ENCODE measurements at regions of chr6 and their contacts with region 1.

Region 1: DNA sequence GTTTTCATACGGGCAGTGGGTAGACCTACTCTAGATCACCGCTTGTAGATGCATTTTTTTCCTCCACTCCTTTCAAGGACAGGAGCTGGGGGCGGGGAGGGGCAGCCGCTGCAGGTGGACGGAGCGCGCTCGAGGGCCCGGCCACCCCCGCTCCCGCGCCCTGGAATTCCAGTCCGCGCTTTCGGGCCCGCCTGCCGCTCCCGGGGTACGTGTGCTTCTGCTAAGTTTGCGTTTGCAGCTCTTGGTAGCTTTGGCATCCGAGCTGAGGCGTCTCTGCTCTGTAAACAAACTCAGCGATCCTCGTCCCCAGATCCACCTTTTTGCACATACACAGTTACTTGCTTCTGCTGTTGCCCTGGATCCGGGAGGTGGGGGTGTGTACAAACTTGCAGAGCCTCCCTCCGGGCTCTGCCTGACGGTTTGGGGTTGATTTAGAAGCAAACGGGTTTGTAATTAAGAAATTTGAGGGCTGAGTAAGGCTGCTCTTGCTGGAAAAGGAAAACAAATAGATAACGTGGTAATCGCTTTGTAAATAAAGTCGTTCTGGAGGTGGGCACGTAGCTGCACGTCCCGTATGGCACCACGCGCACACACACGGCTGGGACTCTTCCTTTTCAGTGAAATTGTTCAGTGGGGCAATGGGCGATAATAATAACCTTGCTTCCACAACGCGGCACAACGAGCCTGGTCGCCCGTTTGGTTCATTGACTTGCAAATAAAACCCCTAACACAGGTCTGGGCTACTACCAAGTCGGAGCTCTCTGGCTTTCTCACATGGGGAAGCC is 976 bp upstream of the CITED2 start:
- DNase-seq: peak; percentile 90
- ATAC-seq: peak; percentile 70
- H3K4me3 ChIP-seq: peak overlapping the region; percentile 91
- H3K27ac ChIP-seq: peak overlapping the region; percentile 83
- H3K4me1 ChIP-seq: peaks cover 35% of the 10 kb centered on the region
- H3K27me3 ChIP-seq: no peaks in the 10 kb centered on the region
- CTCF ChIP-seq: no peak

Region 2: DNA sequence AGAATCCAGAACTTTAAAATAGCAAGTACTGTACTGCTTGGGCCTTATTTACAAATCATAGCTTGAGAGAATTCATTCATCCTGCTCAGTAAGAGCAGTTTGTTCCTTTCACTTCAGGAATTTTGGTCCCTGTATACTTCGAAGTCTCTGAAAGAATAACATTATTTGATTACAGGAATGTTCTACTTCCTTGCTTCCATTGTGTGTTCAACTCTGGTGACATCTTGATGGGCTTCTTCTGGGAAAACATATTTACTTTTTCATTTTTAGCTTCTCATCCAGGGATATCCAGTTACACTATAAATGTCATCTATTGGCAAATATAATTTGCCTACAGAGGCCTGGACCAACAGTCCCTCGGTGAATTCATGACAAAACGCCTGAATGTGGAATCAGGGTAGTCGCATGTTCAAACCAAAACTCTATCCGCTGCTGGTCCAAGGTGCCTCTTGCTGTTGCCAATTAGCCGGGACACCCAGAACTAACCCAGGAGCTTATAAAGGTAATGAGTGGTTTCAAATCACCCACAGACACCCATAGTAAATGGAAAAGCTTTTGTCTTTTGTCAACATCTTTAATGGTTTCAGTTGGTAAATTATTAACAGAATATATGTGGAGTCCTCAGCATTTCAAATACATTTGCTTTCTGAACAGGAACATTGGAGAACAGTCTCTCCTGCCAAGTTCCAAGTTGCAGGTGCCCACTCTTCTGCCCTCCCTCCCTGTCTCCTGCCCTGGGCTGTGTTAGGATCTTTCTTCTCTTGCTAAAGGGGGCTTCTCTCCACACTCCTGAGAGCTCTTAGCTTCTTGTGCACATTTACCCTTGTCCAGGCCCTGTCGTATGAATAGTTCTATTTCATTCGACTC is 161.6 kb after region 1 on chr6:
- CTCF ChIA-PET with region 1: interaction called, 4 read pairs
- POLR2A ChIA-PET with region 1: interaction called, 11 read pairs
- intact Hi-C with region 1: no loop called
- DNase-seq: no peak
- ATAC-seq: no peak
- H3K4me3 ChIP-seq: no peak overlapping the region
- H3K27ac ChIP-seq: no peak overlapping the region
- H3K4me1 ChIP-seq: peaks cover 13% of the 10 kb centered on the region
- H3K27me3 ChIP-seq: no peaks in the 10 kb centered on the region
- CTCF ChIP-seq: no peak

Region 3: DNA sequence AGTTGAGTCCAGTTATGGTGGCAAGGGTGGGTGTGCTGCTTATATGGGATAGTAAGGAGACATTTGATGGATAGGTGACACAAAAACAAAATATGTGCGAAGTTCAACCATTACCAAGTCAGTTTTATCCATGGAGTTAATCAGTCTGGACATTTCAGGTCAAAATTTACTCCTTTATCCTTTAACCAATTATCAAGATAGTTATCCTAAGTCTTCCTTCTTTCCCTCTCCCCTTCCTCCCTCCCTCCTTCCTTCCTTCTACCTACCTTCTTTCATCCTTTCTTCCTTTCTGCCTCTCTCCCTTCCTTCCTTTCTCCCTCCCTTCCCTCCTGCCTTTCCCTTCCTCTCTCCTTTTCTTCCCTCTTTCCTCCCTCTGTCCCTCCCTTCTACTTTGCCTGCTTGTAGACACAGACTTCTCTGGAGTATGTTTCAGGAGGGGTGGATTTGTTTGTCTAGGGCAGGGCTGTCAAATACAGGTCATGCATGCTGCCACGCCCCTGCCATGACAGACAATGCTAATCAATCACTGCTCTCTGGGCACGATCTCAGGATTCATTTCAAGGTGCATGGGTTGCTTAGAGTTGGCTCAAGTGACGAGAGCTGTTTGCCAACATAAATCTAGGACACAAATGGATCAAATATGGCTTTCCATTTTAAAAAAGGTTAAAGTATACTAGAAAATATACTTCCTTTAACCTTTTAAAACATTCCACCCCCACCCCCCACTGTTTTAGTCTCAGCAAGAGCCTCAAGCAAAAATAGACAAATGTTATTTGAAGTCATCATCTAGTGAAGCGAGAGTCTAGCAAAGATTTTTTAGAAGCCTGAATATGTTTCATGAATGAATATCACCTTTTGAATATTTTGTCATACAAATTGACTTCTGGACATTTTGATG is 280.6 kb after region 1 on chr6:
- CTCF ChIA-PET with region 1: no interaction called
- POLR2A ChIA-PET with region 1: interaction called, 6 read pairs
- intact Hi-C with region 1: loop called (anchors 1 kb)
- DNase-seq: peak; percentile 77
- ATAC-seq: peak; percentile 99
- H3K4me3 ChIP-seq: no peak overlapping the region; the same call in 1 of the 2 replicates
- H3K27ac ChIP-seq: peak overlapping the region; percentile 59
- H3K4me1 ChIP-seq: peaks cover 16% of the 10 kb centered on the region
- H3K27me3 ChIP-seq: no peaks in the 10 kb centered on the region
- CTCF ChIP-seq: no peak

Region 4: DNA sequence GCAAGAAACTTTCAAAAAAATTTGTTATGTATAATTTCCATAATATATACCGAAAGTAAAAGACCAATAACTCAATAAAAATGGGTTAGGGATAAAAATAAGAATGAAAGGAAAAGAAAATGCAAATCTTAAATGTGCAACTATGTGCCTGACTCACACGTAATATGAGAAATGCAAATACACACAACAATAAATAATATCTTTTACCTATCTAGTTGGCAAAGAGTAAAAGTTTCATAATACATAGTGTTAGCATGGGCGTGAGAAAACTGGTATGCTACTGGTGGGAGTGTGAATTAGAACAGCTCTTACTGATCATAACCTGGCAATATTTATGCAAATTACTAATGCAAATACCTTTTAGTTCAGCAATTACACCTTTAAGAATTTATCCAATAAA is 437.5 kb after region 1 on chr6:
- CTCF ChIA-PET with region 1: no interaction called
- POLR2A ChIA-PET with region 1: no interaction called
- intact Hi-C with region 1: loop called (anchors 5 kb)
- DNase-seq: peak; percentile 4
- ATAC-seq: no peak
- H3K4me3 ChIP-seq: no peak overlapping the region
- H3K27ac ChIP-seq: no peak overlapping the region
- H3K4me1 ChIP-seq: peaks cover 7% of the 10 kb centered on the region
- H3K27me3 ChIP-seq: no peaks in the 10 kb centered on the region
- CTCF ChIP-seq: no peak

Region 5: GRCh38 chr6:140043336-140043735 is 667.9 kb after region 1 on chr6:
- CTCF ChIA-PET with region 1: no interaction called
- POLR2A ChIA-PET with region 1: interaction called, 3 read pairs
- intact Hi-C with region 1: loop called (anchors 2 kb)
- DNase-seq: peak; percentile 92
- ATAC-seq: peak; percentile 83
- H3K4me3 ChIP-seq: no peak overlapping the region
- H3K27ac ChIP-seq: peak overlapping the region; percentile 78
- H3K4me1 ChIP-seq: peaks cover 56% of the 10 kb centered on the region
- H3K27me3 ChIP-seq: no peaks in the 10 kb centered on the region
- CTCF ChIP-seq: no peak

Region 6: DNA sequence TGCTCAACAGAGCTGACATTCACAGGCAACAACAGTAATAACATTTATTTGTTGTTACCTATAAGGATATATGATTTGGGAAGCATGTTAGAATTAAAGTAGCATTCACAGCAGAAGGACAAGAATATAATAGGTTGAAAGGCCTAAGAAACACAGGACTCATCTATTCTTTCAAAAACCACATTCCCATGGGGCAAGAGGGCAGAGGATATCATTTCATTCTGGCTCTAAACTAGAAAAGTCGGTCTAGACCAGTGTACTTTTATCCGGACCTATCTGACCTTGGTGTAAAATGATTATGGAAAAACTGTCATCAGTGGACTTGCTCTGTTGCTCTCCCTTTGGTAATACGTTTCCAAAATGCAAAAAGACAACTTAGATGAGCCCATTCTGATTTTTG is 913.8 kb after region 1 on chr6:
- CTCF ChIA-PET with region 1: no interaction called
- POLR2A ChIA-PET with region 1: no interaction called
- intact Hi-C with region 1: no loop called
- DNase-seq: no peak
- ATAC-seq: no peak
- H3K4me3 ChIP-seq: no peak overlapping the region
- H3K27ac ChIP-seq: no peak overlapping the region
- H3K4me1 ChIP-seq: no peaks in the 10 kb centered on the region
- H3K27me3 ChIP-seq: no peaks in the 10 kb centered on the region
- CTCF ChIP-seq: no peak

Region 7: DNA sequence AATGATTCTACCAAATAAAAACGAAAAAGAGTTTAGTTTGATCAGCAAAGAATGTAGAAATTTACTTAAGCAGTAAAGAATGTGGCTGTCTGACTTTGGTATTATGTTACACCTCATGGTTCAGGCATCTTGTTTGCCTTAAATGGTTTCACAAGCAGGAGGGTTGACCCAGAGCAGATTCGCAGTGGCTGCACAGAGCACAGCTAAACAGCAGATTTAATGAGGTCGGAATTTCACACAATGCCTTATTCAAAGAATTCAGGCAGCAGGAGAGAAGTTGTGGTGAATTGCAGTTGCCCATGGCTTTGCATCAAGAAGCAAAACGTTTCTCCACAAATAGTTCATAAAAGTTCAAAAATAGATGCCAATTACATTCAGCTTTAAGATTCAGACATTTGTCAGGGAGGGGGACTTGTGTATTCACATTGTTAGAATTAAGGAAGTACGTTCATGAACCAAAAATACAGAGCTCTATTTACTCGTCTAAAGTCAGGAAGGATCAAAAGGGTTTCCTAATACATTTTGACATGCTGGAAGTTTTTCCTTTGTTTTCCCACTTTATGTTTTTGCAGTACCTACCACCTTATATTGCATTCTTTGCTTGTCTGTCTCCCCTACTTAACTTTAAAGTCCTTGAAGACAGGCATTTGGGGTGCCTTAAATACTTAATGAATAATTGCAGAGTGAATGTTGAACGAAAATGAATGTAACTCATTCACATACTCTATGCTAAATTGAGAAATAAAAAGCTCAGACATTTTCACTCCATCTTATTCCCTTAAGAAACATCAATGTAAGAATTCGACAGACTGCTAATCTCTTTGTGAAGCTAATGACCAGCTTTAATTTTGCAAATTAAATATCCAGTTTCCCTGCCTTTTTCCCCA is 1162.6 kb after region 1 on chr6:
- CTCF ChIA-PET with region 1: no interaction called
- POLR2A ChIA-PET with region 1: no interaction called
- intact Hi-C with region 1: loop called (anchors 5 kb)
- DNase-seq: peak; percentile 77
- ATAC-seq: peak; percentile 100
- H3K4me3 ChIP-seq: peak overlapping the region; percentile 49
- H3K27ac ChIP-seq: peak overlapping the region; percentile 68
- H3K4me1 ChIP-seq: peaks cover 23% of the 10 kb centered on the region
- H3K27me3 ChIP-seq: no peaks in the 10 kb centered on the region
- CTCF ChIP-seq: no peak

Measured in PC-3 (cell line).